ENCODE measurements at regions of chr19 and their contacts with region 1.

Region 1: GRCh38 chr19:49473868-49474544 is at the start of gene FLT3LG:
- DNase-seq: peak; percentile 89
- H3K4me3 Mint-ChIP-seq: peak within 1 kb of the TSS; percentile 88
- H3K27ac Mint-ChIP-seq: peak within 1 kb of the TSS; percentile 95
- H3K4me1 Mint-ChIP-seq: peaks cover 65% of the 10 kb centered on the region
- H3K27me3 Mint-ChIP-seq: no peaks in the 10 kb centered on the region
- total RNA-seq, gene FLT3LG: 23.9 to 28.4 TPM

Region 2: DNA sequence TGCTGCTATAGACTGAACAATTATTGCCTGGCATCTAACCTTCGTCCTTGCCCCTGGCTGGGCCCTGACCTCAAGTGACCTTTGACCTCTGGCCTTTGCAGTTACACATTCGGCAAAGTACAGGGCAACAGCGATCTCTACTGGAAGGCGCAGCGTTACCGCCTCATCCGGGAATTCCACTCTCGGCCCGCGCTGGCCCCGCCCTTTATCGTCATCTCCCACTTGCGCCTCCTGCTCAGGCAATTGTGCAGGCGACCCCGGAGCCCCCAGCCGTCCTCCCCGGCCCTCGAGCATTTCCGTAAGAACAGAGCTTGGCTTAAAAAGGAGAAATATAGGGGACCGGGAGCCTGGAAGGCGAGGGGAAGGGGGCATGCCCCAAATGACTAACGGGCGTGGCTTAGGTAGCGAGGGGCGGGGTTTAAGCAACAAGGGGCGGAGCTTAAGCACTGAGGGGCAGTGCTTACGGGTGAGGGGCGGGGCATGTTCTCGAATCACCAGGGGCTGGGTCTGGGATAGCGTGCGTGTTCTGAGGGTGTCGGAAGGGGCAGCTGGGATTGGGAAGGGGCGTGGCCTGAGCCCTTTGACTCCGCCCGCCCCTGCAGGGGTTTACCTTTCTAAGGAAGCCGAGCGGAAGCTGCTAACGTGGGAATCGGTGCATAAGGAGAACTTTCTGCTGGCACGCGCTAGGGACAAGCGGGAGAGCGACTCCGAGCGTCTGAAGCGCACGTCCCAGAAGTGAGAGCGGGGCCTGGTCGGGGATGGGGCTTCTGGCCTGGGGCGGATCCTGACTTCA is 263.7 kb before region 1 on chr19:
- CTCF ChIA-PET with region 1: no interaction called
- intact Hi-C with region 1: no loop called
- DNase-seq: peak; percentile 55
- H3K4me3 Mint-ChIP-seq: peak overlapping the region; percentile 60
- H3K27ac Mint-ChIP-seq: no peak overlapping the region
- H3K4me1 Mint-ChIP-seq: peaks cover 3% of the 10 kb centered on the region
- H3K27me3 Mint-ChIP-seq: peaks cover 2% of the 10 kb centered on the region

Region 3: GRCh38 chr19:49224856-49225255 is 249.2 kb before region 1 on chr19:
- CTCF ChIA-PET with region 1: no interaction called
- intact Hi-C with region 1: loop called (anchors 1 kb)
- DNase-seq: peak; percentile 70
- H3K4me3 Mint-ChIP-seq: no peak overlapping the region
- H3K27ac Mint-ChIP-seq: no peak overlapping the region
- H3K4me1 Mint-ChIP-seq: peaks cover 4% of the 10 kb centered on the region
- H3K27me3 Mint-ChIP-seq: peaks cover 4% of the 10 kb centered on the region

Region 4: GRCh38 chr19:49391581-49392399 is 82.2 kb before region 1 on chr19:
- CTCF ChIA-PET with region 1: interaction called, 18 read pairs
- intact Hi-C with region 1: loop called (anchors 1 kb)
- DNase-seq: peak; percentile 88
- H3K4me3 Mint-ChIP-seq: no peak overlapping the region
- H3K27ac Mint-ChIP-seq: no peak overlapping the region
- H3K4me1 Mint-ChIP-seq: peaks cover 15% of the 10 kb centered on the region
- H3K27me3 Mint-ChIP-seq: peaks cover 3% of the 10 kb centered on the region

Region 5: GRCh38 chr19:49451430-49452181 is 22.4 kb before region 1 on chr19 and contains the start of gene PIH1D1:
- CTCF ChIA-PET with region 1: interaction called, 17 read pairs
- intact Hi-C with region 1: loop called (anchors 1 kb)
- DNase-seq: peak; percentile 99
- H3K4me3 Mint-ChIP-seq: peak within 1 kb of the TSS; percentile 100
- H3K27ac Mint-ChIP-seq: peak within 1 kb of the TSS; percentile 100
- H3K4me1 Mint-ChIP-seq: peaks cover 40% of the 10 kb centered on the region
- H3K27me3 Mint-ChIP-seq: no peaks in the 10 kb centered on the region
- total RNA-seq, gene PIH1D1: 80.7 to 84.4 TPM

Region 6: DNA sequence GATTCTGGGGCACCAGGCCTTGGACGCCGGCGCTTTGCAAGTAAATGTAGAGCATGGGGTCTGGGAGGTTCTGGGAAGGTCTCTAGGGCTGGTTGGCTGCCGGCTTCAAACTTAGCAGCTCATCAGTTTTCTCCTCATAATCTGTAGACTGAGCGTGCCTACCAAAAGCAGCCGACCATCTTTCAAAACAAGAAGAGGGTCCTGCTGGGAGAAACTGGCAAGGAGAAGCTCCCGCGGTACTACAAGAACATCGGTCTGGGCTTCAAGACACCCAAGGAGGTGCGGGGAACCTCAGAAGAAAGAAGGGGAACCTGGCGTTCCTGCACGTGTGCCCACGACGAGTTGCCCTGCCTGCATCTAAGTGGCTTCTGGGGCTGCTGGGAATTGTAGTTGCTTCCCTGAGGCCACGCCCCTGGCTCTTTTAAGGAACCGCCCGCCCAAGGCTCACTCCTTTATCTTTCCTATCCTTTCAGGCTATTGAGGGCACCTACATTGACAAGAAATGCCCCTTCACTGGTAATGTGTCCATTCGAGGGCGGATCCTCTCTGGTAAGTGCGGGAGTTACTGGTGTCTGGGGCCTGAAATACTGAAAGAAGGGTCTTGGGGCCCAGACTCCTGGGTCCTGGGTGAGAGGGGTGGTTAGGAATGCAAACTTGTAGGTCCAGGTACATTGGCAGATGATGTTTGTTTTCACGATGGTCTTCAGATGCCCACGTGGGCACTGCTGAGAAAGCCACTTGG is 23.2 kb after region 1 on chr19:
- CTCF ChIA-PET with region 1: interaction called, 5 read pairs
- intact Hi-C with region 1: loop called (anchors 1 kb)
- DNase-seq: peak; percentile 79
- H3K4me3 Mint-ChIP-seq: peak overlapping the region; percentile 87
- H3K27ac Mint-ChIP-seq: peak overlapping the region; percentile 96
- H3K4me1 Mint-ChIP-seq: peaks cover 49% of the 10 kb centered on the region
- H3K27me3 Mint-ChIP-seq: no peaks in the 10 kb centered on the region

Region 7: DNA sequence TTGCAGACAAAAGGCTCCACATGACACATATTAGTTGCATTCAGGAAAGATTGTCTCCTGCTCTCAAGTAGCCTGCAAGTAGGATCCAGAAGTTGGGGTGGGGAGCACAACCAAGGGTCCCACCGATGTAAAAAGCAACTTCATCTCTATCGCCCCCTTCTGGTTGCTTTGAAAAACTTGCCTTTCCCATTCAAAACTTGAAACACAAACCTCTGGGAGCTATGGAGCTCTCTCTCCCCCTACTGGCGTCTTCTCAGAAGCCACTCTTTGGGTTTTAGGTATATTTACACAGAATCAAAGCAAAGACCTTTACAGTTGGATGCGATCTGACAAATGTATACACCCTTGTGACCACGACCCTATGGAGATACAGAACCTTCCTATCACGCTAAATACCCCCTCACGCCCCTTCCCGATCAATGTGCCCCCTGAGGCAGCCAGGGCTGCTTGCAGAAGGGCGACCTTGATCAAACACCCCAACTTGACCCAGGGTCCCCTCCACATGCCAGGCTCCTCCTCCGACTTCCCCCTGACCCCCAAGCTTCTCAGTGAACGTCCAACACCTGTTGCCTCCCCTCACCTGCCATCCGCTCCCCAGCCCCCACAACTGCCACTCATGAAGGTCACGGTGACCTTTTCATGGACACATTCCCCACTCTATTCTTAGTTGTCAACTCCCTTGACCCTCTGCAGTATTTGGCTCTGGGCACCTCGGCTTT is 96.3 kb after region 1 on chr19:
- CTCF ChIA-PET with region 1: interaction called, 4 read pairs
- intact Hi-C with region 1: loop called (anchors 1 kb)
- DNase-seq: peak; percentile 88
- H3K4me3 Mint-ChIP-seq: no peak overlapping the region
- H3K27ac Mint-ChIP-seq: peak overlapping the region; percentile 0
- H3K4me1 Mint-ChIP-seq: peaks cover 53% of the 10 kb centered on the region
- H3K27me3 Mint-ChIP-seq: no peaks in the 10 kb centered on the region